K562 (cell line): ENCODE measurements at regions of chr16 and their contacts with region 1.

Region 1: DNA sequence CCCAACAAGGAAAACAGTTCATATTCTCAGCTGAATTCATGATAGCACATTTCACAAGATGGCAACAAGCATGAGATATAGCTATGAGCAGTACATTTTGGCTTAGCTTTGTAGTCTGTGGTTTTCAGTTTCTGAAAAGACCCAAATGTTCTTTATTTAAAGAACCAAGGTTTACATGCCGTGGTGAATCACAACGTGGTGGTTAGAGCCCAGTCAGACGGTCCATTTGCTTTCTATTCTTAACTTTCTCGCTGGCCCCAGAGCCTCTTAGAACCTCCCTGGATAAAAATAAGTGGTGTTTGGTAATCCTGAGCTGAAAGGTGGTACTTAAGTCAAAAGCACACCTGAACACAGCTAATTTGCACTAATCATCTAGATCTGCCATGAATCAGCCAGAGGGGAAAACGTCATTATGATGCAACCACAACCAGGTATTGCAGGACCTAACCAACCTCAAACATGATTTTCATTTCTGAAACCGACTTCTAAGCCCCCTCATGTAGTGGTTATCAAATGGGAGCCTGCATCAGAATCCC is 18.6 kb upstream of the HAPSTR1 start:
- DNase-seq: no peak
- ATAC-seq: no peak; the same call in 1 of the 3 replicates
- H3K4me3 ChIP-seq: no peak overlapping the region
- H3K27ac ChIP-seq: peak overlapping the region; percentile 61
- H3K4me1 ChIP-seq: peaks cover 15 to 45% of the 10 kb centered on the region in 2 experiments
- H3K27me3 ChIP-seq: no peaks in the 10 kb centered on the region
- CTCF ChIP-seq: no peak
- EP300 ChIP-seq: peak; percentile 79
- POLR2A ChIP-seq: no peak
- RAD21 ChIP-seq: peak in 1 of 2 experiments; percentile 8; a peak in 1 of 4 replicates

Region 2: DNA sequence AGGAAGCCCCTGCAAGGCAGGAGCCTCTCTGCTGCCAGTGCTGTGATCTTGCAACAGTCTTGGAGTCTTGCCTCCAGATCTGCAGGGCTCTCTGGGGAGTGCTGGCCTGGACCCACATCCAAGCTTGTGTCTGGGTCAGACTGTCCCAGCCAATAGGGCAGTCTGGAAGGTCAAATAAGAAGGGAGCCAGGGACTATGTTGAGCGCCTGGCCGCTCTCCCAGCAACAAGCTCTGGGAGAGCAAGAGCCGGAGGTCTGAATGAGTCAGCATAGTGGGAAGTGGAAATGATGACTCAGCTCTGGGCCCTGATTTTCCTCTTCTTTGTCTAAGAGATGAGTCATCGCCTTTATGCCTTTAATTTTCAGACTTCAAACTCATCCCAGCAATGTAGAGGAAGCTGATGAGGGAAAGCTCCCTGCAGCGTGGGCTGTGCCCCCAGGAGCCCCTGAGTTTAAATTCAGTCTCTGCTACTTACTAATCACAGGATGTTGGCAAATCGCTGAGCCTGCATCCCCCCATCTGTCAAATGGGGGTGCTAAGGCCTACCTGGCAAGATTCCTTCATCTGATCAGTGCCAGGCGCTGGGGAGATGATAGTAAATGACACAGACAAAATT is 25.1 kb before region 1 on chr16:
- CTCF ChIA-PET with region 1: no interaction called
- POLR2A ChIA-PET with region 1: interaction called, 13 read pairs
- in situ Hi-C with region 1: no loop called
- intact Hi-C with region 1: no loop called
- DNase-seq: peak; percentile 73 to 95 (median 82)
- ATAC-seq: peak; percentile 92
- H3K4me3 ChIP-seq: no peak overlapping the region
- H3K27ac ChIP-seq: peak overlapping the region; percentile 68; the same call in 2 of the 3 replicates
- H3K4me1 ChIP-seq: peaks cover 17 to 23% of the 10 kb centered on the region in 2 experiments; a peak in 3 of 5 replicates
- H3K27me3 ChIP-seq: no peaks in the 10 kb centered on the region
- CTCF ChIP-seq: no peak
- EP300 ChIP-seq: peak; percentile 74
- POLR2A ChIP-seq: no peak
- RAD21 ChIP-seq: no peak

Region 3: GRCh38 chr16:9053006-9053601 is 19.8 kb before region 1 on chr16:
- CTCF ChIA-PET with region 1: no interaction called
- POLR2A ChIA-PET with region 1: interaction called, 19 read pairs
- in situ Hi-C with region 1: no loop called
- intact Hi-C with region 1: no loop called
- DNase-seq: peak; percentile 79 to 96 (median 84)
- ATAC-seq: peak; percentile 96
- H3K4me3 ChIP-seq: peak overlapping the region; percentile 23; the same call in 1 of the 2 replicates
- H3K27ac ChIP-seq: peak overlapping the region; percentile 45
- H3K4me1 ChIP-seq: peaks cover 9 to 12% of the 10 kb centered on the region in 2 experiments; a peak in 3 of 5 replicates
- H3K27me3 ChIP-seq: no peaks in the 10 kb centered on the region
- CTCF ChIP-seq: no peak
- EP300 ChIP-seq: no peak
- POLR2A ChIP-seq: peak; percentile 75
- RAD21 ChIP-seq: no peak

Region 4: GRCh38 chr16:9061358-9061813 is 11.5 kb before region 1 on chr16:
- CTCF ChIA-PET with region 1: no interaction called
- POLR2A ChIA-PET with region 1: interaction called, 56 read pairs
- in situ Hi-C with region 1: no loop called
- intact Hi-C with region 1: no loop called
- DNase-seq: no peak
- ATAC-seq: peak; percentile 25; the same call in 2 of the 3 replicates
- H3K4me3 ChIP-seq: no peak overlapping the region
- H3K27ac ChIP-seq: no peak overlapping the region; the same call in 2 of the 3 replicates
- H3K4me1 ChIP-seq: peaks cover 0 to 5% of the 10 kb centered on the region in 2 experiments; a peak in 3 of 5 replicates
- H3K27me3 ChIP-seq: no peaks in the 10 kb centered on the region
- CTCF ChIP-seq: no peak
- EP300 ChIP-seq: no peak
- POLR2A ChIP-seq: no peak
- RAD21 ChIP-seq: no peak

Region 5: GRCh38 chr16:9090960-9091866 is 18.3 kb after region 1 on chr16 and contains the start of gene HAPSTR1:
- CTCF ChIA-PET with region 1: no interaction called
- POLR2A ChIA-PET with region 1: interaction called, 69 read pairs
- in situ Hi-C with region 1: no loop called
- intact Hi-C with region 1: no loop called
- DNase-seq: peak; percentile 97 to 100 (median 98)
- ATAC-seq: peak; percentile 93
- H3K4me3 ChIP-seq: peak within 1 kb of the TSS; percentile 95
- H3K27ac ChIP-seq: peak within 1 kb of the TSS; percentile 97
- H3K4me1 ChIP-seq: peaks cover 20 to 24% of the 10 kb centered on the region in 2 experiments
- H3K27me3 ChIP-seq: no peaks in the 10 kb centered on the region
- CTCF ChIP-seq: no peak
- EP300 ChIP-seq: peak; percentile 16; the same call in 1 of the 2 replicates
- POLR2A ChIP-seq: peak; percentile 92
- RAD21 ChIP-seq: no peak
- polyA plus RNA-seq, gene HAPSTR1: 10.8 to 17.4 TPM

Region 6: DNA sequence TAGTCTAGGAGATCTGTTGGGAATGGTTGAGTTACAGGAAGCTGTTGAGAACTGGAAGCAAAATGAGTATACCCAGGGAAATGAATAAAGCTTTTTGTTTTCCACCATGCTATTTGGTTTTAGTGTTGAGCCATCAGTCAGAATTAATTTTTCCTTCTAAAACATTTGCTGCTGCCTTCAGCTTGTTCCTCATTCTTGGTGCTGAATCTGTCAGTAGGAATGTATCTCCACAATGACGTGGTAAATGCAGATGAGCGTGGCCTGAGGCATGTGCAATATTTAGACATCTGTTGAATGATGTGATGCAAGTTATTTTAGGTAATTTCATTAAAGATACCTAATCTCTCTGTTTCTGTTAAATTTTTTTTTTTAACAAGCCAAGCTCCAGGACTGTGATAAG is 29.5 kb after region 1 on chr16:
- CTCF ChIA-PET with region 1: no interaction called
- POLR2A ChIA-PET with region 1: interaction called, 10 read pairs
- in situ Hi-C with region 1: no loop called
- intact Hi-C with region 1: no loop called
- DNase-seq: no peak
- ATAC-seq: no peak
- H3K4me3 ChIP-seq: no peak overlapping the region
- H3K27ac ChIP-seq: no peak overlapping the region
- H3K4me1 ChIP-seq: peaks cover 5 to 34% of the 10 kb centered on the region in 2 experiments; a peak in 3 of 5 replicates
- H3K27me3 ChIP-seq: no peaks in the 10 kb centered on the region
- CTCF ChIP-seq: no peak
- EP300 ChIP-seq: no peak
- POLR2A ChIP-seq: no peak
- RAD21 ChIP-seq: no peak

Region 7: DNA sequence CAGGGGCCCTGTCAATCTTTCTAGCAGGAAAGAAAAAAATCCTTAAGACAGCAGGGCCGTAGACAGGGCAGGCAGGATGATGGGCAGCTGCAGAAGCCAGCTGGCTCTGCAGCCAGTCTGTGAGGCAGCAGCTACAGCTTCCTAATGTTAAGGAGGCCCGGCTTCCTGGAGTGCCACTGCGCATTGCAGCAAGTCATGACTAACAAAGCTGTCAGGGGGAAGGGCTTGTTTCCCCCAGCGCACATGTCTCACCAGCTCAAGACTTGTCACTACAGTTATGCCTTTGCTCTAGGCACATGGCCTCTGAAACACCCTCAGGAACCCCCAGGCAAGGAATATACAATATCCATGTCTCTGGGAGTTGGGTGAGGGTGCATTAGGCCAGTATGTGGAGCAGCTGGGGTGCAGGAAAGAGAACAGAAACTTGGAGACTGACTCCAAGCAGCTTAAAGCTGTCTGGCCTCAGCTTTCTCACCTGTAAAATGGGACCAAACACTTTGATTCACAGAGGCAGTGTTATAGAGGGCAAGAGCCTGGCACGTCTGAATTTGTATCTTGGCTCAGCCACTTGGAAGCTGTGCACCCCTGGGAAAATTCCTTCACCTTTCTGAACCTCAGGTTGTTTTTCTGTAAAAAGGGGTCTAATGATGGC is 238.6 kb after region 1 on chr16:
- CTCF ChIA-PET with region 1: no interaction called
- POLR2A ChIA-PET with region 1: no interaction called
- in situ Hi-C with region 1: no loop called
- intact Hi-C with region 1: no loop called
- DNase-seq: no peak
- ATAC-seq: no peak
- H3K4me3 ChIP-seq: no peak overlapping the region
- H3K27ac ChIP-seq: no peak overlapping the region
- H3K4me1 ChIP-seq: no peaks in the 10 kb centered on the region
- H3K27me3 ChIP-seq: no peaks in the 10 kb centered on the region
- CTCF ChIP-seq: no peak
- EP300 ChIP-seq: no peak
- POLR2A ChIP-seq: no peak
- RAD21 ChIP-seq: no peak